GM18951 (cell line): ENCODE measurements at regions of chr3 and their contacts with region 1.

Region 1: GRCh38 chr3:33787328-33788009 is 11.0 kb upstream of the PDCD6IP start:
- POLR2A ChIP-seq: no peak

Region 2: DNA sequence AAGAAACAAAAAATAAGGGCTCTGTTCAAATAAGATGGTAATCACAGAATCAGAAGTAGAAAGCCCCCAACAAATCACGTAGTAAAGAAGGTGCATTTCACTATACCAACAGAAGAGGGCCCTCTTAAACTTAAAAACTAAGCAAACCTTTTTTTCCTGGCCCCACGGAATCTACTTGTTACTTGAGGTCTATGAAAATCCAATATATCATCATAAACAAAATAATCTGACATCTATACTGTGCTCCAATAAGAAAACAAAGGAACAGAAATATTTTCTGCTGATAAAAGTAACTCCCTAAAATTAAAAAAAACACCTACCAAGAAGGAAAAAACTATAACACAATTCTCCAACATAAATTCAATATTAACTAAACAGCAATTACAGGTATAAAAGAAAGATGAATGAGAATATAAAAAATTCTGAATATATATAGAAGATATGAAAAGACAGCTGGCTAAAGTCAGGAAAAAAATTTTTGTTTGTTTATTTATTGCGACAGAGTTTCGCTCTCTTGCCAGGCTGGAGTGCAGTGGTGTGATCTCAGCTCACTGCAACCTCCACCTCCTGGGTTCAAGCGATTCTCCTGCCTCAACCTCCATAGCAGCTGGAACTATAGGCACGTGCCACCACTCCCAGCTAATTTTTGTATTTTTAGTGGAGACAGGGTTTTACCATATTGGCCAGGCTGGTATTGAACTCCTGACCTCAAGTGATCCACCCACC is 151.2 kb before region 1 on chr3:
- in situ Hi-C with region 1: loop called (anchors 10 kb)
- POLR2A ChIP-seq: no peak

Region 3: GRCh38 chr3:34155666-34156065 is 368.2 kb after region 1 on chr3:
- in situ Hi-C with region 1: no loop called
- POLR2A ChIP-seq: no peak